Naive thymus-derived CD8-positive, alpha-beta T cell (primary cell): ENCODE measurements at regions of chr16 and their contacts with region 1.

Region 1: GRCh38 chr16:28981517-28981916 is 3.3 kb upstream of the LAT start:
- DNase-seq: peak in 4 of 10 donors; percentile 15 to 45 (median 28)
- ATAC-seq: no peak
- H3K4me3 Mint-ChIP-seq: no peak overlapping the region
- H3K27ac Mint-ChIP-seq: peak overlapping the region in 4 of 10 donors; percentile 47 to 85 (median 58)
- H3K4me1 Mint-ChIP-seq: peaks cover 29 to 47% (median 46%) of the 10 kb centered on the region in 4 donors
- H3K27me3 Mint-ChIP-seq: no peaks in the 10 kb centered on the region

Region 2: DNA sequence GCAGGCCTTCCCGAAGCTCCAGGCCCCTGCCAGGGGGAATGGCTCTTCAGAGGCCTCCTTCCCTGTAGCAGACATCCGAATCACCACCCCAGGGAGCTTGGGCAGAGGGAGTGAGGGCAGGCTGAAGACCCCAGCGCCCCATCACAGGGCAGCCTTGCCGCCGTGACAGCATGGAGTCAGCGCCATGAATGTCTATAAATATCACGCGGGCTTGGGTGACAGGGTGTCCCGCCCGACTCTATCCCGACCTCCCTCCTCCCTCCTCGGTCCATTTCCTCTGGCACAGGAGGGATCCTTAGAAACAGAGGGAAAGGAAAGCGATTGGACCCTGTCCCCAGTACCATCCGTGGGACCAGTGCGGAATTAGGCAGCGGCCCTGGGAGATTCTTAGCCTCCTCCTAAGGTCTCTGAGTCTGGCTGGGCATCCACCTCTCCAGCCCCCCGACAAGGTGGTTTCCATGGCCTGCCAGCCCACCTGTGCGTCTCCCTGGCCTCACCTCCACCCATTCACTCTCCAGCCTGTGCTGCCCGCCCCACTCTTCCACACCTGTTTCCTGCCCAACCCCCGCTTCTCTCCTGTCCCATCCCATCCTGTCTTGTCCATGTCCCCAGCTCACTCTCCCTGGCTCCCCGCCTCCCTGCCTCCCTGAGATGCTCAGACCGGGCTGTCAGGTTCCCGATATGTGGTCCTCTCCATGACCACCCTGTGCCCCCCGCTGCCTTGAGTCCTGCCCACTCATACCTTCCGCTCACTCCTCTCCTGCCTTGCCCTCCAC is 98.1 kb before region 1 on chr16:
- POLR2A ChIA-PET with region 1: no interaction called
- DNase-seq: no peak
- ATAC-seq: no peak
- H3K4me3 Mint-ChIP-seq: no peak overlapping the region
- H3K27ac Mint-ChIP-seq: peak overlapping the region in 1 of 10 donors; percentile 38
- H3K4me1 Mint-ChIP-seq: peaks cover 7 to 16% (median 15%) of the 10 kb centered on the region in 4 donors
- H3K27me3 Mint-ChIP-seq: peaks cover 4 to 13% (median 11%) of the 10 kb centered on the region in 5 donors

Region 3: DNA sequence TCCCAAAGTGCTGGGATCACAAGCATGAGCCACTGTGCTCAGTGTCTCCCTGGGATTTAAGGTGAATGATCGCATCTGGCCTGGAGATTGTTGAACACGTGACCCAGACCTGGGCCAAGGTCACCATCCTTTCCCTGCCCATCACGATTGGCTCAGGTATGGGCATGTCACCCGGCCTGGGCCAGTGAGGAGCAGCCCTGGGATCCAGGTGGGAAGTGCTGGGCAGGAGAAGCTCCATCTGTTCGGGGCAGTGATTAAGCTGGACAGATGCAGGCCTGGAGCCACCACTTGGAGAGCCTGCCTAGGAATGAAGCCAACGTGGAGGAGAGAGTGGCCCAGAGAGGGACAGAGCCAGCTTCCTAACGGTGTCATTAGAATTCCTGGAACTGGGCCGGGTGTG is 10.2 kb after region 1 on chr16:
- POLR2A ChIA-PET with region 1: interaction called, 494 read pairs
- DNase-seq: no peak
- ATAC-seq: no peak
- H3K4me3 Mint-ChIP-seq: peak overlapping the region in 1 of 10 donors; percentile 13
- H3K27ac Mint-ChIP-seq: peak overlapping the region; percentile 40 to 100 (median 90)
- H3K4me1 Mint-ChIP-seq: peaks cover 29 to 75% (median 56%) of the 10 kb centered on the region in 4 donors
- H3K27me3 Mint-ChIP-seq: no peaks in the 10 kb centered on the region

Region 4: DNA sequence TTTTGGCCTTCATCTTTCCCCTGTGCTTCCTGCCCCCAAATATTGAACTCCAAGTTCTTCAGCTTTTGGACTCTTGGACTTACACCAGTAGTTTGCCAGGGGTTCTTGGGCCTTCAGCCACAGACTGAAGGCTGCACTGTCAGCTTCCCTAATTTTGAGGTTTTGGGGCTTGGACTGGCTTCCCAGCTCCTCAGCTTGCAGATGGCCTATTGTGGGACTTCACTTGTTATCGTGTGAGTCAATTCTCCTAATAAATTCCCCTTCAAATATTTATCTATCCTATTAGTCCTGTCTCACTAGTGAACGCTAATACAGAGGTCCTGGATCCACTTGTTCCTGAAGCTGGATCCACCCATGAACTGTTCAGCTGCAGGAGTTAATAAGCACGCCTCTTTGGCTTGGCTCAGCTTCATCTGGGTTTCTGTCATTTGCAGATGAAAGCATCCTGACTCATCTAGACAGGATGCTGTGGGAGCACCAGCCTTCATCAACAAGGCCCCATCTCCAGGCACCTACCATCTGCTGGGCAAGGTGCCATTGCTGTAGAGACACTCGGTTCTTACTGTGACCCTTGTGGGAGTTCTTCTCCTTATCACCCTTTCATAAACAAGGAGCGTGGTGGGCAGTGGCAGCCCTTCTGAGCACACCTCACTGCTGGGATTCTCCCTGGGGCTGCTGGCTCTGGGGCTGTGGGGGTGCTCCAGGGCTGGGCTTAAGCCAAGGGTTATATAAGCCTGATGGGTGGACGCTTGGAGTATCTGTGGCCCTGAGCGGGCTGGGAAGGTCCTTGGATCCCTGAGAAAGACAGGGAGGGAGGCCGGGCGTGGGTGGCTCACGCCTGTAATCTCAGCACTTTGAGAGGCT is 26.4 kb after region 1 on chr16:
- POLR2A ChIA-PET with region 1: interaction called, 494 read pairs
- DNase-seq: peak in 8 of 10 donors; percentile 43 to 88 (median 64)
- ATAC-seq: peak; percentile 76 to 80
- H3K4me3 Mint-ChIP-seq: peak overlapping the region; percentile 57 to 89 (median 72)
- H3K27ac Mint-ChIP-seq: peak overlapping the region; percentile 90 to 100 (median 95)
- H3K4me1 Mint-ChIP-seq: peaks cover 29 to 65% (median 62%) of the 10 kb centered on the region in 4 donors
- H3K27me3 Mint-ChIP-seq: no peaks in the 10 kb centered on the region

Region 5: GRCh38 chr16:29023279-29024277 is 42.1 kb after region 1 on chr16:
- POLR2A ChIA-PET with region 1: interaction called, 110 read pairs
- DNase-seq: peak in 5 of 10 donors; percentile 18 to 61 (median 50)
- ATAC-seq: peak; percentile 52 to 68
- H3K4me3 Mint-ChIP-seq: peak overlapping the region; percentile 31 to 86 (median 70)
- H3K27ac Mint-ChIP-seq: peak overlapping the region; percentile 90 to 98 (median 94)
- H3K4me1 Mint-ChIP-seq: peaks cover 26 to 70% (median 56%) of the 10 kb centered on the region in 4 donors
- H3K27me3 Mint-ChIP-seq: no peaks in the 10 kb centered on the region

Region 6: GRCh38 chr16:29114569-29114968 is 133.1 kb after region 1 on chr16:
- POLR2A ChIA-PET with region 1: no interaction called
- DNase-seq: no peak
- ATAC-seq: no peak
- H3K4me3 Mint-ChIP-seq: no peak overlapping the region
- H3K27ac Mint-ChIP-seq: peak overlapping the region; percentile 32 to 97 (median 77)
- H3K4me1 Mint-ChIP-seq: peaks cover 10 to 79% (median 27%) of the 10 kb centered on the region in 4 donors
- H3K27me3 Mint-ChIP-seq: no peaks in the 10 kb centered on the region